Activated CD4-positive, alpha-beta T cell treated with anti-CD3 and anti-CD28 coated beads for 36 hours (primary cell): ENCODE measurements at regions of chr15 and their contacts with region 1.

Region 1: GRCh38 chr15:49696433-49696832 is 75.6 kb downstream of the DTWD1 start:
- DNase-seq: no peak
- ATAC-seq: no peak
- H3K4me3 Mint-ChIP-seq: no peak overlapping the region
- H3K27ac Mint-ChIP-seq: no peak overlapping the region
- H3K4me1 Mint-ChIP-seq: no peaks in the 10 kb centered on the region
- H3K27me3 Mint-ChIP-seq: peaks cover 4% of the 10 kb centered on the region

Region 2: DNA sequence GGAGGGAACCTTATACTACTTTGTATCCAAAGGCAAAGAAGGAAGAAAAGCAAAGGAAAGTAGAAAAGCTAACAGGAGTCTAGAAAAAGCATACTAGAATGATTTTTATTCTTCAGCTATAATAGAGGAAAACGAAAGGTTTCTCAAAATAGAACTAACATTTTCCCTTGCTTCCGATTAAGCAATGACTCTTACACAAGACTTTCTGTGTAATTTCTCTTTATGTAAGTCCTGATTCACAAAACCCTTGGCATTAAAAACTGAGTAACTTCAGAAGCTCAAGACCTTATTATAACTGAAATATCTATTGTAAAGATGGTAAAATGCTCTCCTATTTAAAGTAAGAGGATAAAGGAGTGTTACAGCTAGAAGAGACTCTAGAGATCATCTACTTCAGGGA is 21.8 kb after region 1 on chr15:
- CTCF ChIA-PET with region 1: no interaction called
- POLR2A ChIA-PET with region 1: no interaction called
- intact Hi-C with region 1: loop called in 1 of 2 experiments (anchors 2 kb)
- DNase-seq: no peak
- ATAC-seq: no peak
- H3K4me3 Mint-ChIP-seq: no peak overlapping the region
- H3K27ac Mint-ChIP-seq: no peak overlapping the region
- H3K4me1 Mint-ChIP-seq: peaks cover 1% of the 10 kb centered on the region
- H3K27me3 Mint-ChIP-seq: peaks cover 2% of the 10 kb centered on the region